K562 (cell line): ENCODE measurements at regions of chr4 and their contacts with region 1.

Region 1: GRCh38 chr4:151015459-151016347 is 619 bp upstream of the LRBA start:
- DNase-seq: peak; percentile 85 to 88 (median 86)
- ATAC-seq: peak; percentile 77
- H3K4me3 ChIP-seq: peak overlapping the region; percentile 98
- H3K27ac ChIP-seq: peak overlapping the region; percentile 97
- H3K4me1 ChIP-seq: peaks cover 0 to 18% of the 10 kb centered on the region in 2 experiments; a peak in 3 of 5 replicates
- H3K27me3 ChIP-seq: no peaks in the 10 kb centered on the region
- CTCF ChIP-seq: no peak
- EP300 ChIP-seq: no peak; the same call in 1 of the 2 replicates
- POLR2A ChIP-seq: peak; percentile 96
- RAD21 ChIP-seq: no peak

Region 2: DNA sequence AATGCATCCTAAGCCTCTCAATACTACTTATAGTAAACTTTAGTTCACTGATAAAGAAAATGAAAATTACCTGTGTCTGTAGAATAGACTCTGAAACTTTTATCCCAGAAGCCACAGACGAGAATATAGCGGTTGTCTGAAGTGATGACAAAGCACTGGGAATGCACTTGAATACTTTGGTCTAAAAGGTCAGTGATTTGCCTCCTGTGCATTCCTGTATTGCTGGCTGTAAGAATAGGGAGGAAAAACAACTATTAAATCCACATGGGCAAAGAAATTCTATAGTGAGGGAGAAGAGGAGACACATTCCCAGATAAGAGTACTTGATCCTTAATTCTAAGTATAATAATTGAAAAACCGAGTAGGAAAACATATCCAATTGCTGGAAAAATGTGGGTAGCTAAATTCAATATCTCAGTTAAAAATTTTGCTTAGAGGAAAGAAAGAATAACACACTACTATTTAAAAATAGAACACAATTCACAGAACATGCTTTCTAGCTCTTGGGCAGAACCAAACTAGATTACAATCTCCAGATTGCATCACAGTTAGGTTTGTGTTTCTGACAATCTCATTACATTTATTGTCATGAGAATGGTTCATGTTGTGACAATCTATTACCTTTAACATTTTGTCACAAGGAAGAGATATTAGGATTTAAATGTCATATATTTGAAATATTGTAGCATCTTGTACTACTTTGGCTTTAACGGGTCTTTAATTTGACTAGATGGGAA is 705.4 kb before region 1 on chr4:
- CTCF ChIA-PET with region 1: no interaction called
- POLR2A ChIA-PET with region 1: no interaction called
- in situ Hi-C with region 1: no loop called
- intact Hi-C with region 1: loop called (anchors 10 kb)
- DNase-seq: no peak
- ATAC-seq: no peak
- H3K4me3 ChIP-seq: no peak overlapping the region
- H3K27ac ChIP-seq: no peak overlapping the region
- H3K4me1 ChIP-seq: peaks cover 0 to 10% of the 10 kb centered on the region in 2 experiments; a peak in 3 of 5 replicates
- H3K27me3 ChIP-seq: no peaks in the 10 kb centered on the region
- CTCF ChIP-seq: no peak
- EP300 ChIP-seq: no peak
- POLR2A ChIP-seq: no peak
- RAD21 ChIP-seq: no peak

Region 3: GRCh38 chr4:150943818-150944217 is 71.9 kb before region 1 on chr4:
- CTCF ChIA-PET with region 1: no interaction called
- POLR2A ChIA-PET with region 1: no interaction called
- in situ Hi-C with region 1: no loop called
- intact Hi-C with region 1: loop called (anchors 2 kb)
- DNase-seq: peak in 1 of 4 experiments; percentile 74
- ATAC-seq: peak; percentile 70
- H3K4me3 ChIP-seq: no peak overlapping the region
- H3K27ac ChIP-seq: peak overlapping the region; percentile 79
- H3K4me1 ChIP-seq: peaks cover 3 to 10% of the 10 kb centered on the region in 2 experiments; a peak in 4 of 5 replicates
- H3K27me3 ChIP-seq: no peaks in the 10 kb centered on the region
- CTCF ChIP-seq: no peak
- EP300 ChIP-seq: no peak
- POLR2A ChIP-seq: no peak
- RAD21 ChIP-seq: no peak

Region 4: GRCh38 chr4:151045907-151046306 is 30.2 kb after region 1 on chr4:
- CTCF ChIA-PET with region 1: no interaction called
- POLR2A ChIA-PET with region 1: no interaction called
- in situ Hi-C with region 1: no loop called
- intact Hi-C with region 1: loop called (anchors 1 kb)
- DNase-seq: peak; percentile 26 to 58 (median 40)
- ATAC-seq: peak; percentile 93
- H3K4me3 ChIP-seq: no peak overlapping the region
- H3K27ac ChIP-seq: no peak overlapping the region
- H3K4me1 ChIP-seq: no peaks in the 10 kb centered on the region; a peak in 1 of 5 replicates
- H3K27me3 ChIP-seq: no peaks in the 10 kb centered on the region
- CTCF ChIP-seq: peak; percentile 49 to 66 (median 55); a peak in 4 of 6 replicates
- EP300 ChIP-seq: no peak
- POLR2A ChIP-seq: no peak
- RAD21 ChIP-seq: peak in 1 of 2 experiments; percentile 66; a peak in 3 of 4 replicates

Region 5: GRCh38 chr4:151099229-151099975 is 83.7 kb after region 1 on chr4 and contains the start of gene RPS3A:
- CTCF ChIA-PET with region 1: no interaction called
- POLR2A ChIA-PET with region 1: no interaction called
- in situ Hi-C with region 1: no loop called
- intact Hi-C with region 1: loop called (anchors 5 kb)
- DNase-seq: peak; percentile 82 to 98 (median 87)
- ATAC-seq: peak; percentile 92
- H3K4me3 ChIP-seq: peak within 1 kb of the TSS; percentile 85
- H3K27ac ChIP-seq: peak within 1 kb of the TSS; percentile 89
- H3K4me1 ChIP-seq: peaks cover 7 to 8% of the 10 kb centered on the region in 2 experiments; a peak in 3 of 5 replicates
- H3K27me3 ChIP-seq: no peaks in the 10 kb centered on the region
- CTCF ChIP-seq: peak; percentile 87 to 96 (median 96)
- EP300 ChIP-seq: peak; percentile 55
- POLR2A ChIP-seq: peak; percentile 100
- RAD21 ChIP-seq: 0 out of 4 replicates have a peak, but pooled peaks have one; percentile 4 to 10
- polyA plus RNA-seq, gene RPS3A: 3,558 to 3,768 TPM

Region 6: GRCh38 chr4:151147000-151147399 is 131.3 kb after region 1 on chr4:
- CTCF ChIA-PET with region 1: no interaction called
- POLR2A ChIA-PET with region 1: no interaction called
- in situ Hi-C with region 1: no loop called
- intact Hi-C with region 1: no loop called
- DNase-seq: no peak
- ATAC-seq: peak; percentile 79
- H3K4me3 ChIP-seq: no peak overlapping the region
- H3K27ac ChIP-seq: no peak overlapping the region
- H3K4me1 ChIP-seq: no peaks in the 10 kb centered on the region; a peak in 1 of 5 replicates
- H3K27me3 ChIP-seq: no peaks in the 10 kb centered on the region
- CTCF ChIP-seq: no peak
- EP300 ChIP-seq: no peak
- POLR2A ChIP-seq: no peak
- RAD21 ChIP-seq: no peak